Endothelial cell of umbilical vein (primary cell): ENCODE measurements at regions of chr11 and their contacts with region 1.

Region 1: DNA sequence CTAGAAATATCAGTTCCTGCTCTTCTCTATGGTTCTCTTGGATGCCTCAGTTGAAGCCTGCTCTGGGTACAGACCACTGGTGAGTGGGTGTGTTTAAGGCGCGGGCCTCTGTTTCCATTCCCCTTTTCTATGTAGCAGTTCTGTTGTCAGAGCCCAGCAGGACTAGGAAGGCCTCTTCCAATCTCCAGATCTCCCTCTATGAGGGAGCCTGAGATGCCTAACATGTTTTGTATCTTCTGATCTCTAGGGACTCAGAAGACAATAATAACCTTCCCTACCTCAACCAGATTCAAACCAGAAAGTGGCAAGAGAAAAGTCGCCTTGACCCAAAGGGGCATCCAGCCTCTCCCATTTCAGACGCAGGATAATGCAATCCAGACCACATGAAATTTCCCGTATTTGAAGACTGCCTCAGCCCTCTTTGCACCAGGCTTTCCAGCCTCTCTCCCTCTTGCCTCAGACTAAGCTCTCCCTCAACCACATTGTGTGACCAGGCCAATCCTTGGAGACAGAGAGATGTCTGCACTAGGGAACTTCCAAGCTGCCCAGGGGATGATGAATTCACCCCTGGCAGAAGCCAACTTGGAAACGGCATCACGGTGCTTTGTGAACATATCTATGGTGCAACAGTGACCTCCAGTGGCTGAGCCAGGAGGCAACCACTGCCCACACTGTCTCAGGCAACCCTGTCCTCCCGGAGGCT is 150.1 kb upstream of the UBASH3B start:
- DNase-seq: peak; percentile 77
- H3K4me3 ChIP-seq: no peak overlapping the region
- H3K27ac ChIP-seq: no peak overlapping the region
- H3K4me1 ChIP-seq: no peaks in the 10 kb centered on the region
- H3K27me3 ChIP-seq: peaks cover 2 to 6% of the 10 kb centered on the region in 2 experiments
- CTCF ChIP-seq: peak; percentile 83 to 84
- POLR2A ChIP-seq: no peak

Region 2: DNA sequence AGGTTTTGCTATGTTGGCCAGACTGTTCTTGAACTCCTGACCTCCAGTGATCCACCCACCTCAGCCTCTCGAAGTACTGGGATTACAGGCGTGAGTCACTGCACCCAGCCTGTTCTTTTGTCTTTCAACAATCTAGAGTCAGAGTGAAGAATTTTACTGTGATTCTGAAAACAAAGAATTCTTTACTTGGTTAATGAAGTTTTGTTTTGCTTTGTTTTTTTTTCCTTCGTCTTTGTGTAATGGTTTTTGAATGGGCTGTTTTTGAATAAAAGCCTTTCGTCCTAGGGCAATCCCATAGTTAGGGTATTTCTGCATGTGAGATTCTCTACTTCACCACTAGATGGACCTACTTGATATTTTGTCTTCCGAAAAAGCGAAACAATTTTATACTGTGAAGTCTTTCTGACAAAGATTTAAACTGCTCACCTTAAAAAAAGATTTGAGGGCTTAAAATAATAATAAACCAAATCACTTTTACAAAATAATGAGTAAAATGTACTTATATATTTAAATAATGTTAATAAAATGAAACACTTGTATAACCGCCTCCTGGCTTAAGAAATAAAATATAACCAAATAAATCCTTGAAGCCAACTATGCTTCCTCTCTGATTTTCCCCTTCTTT is 1256.3 kb before region 1 on chr11:
- CTCF ChIA-PET with region 1: interaction called, 3 read pairs
- POLR2A ChIA-PET with region 1: no interaction called
- dilution Hi-C with region 1: no loop called
- intact Hi-C with region 1: loop called (anchors 1 kb)
- DNase-seq: peak; percentile 54
- H3K4me3 ChIP-seq: no peak overlapping the region
- H3K27ac ChIP-seq: no peak overlapping the region
- H3K4me1 ChIP-seq: no peaks in the 10 kb centered on the region
- H3K27me3 ChIP-seq: peaks cover 0 to 2% of the 10 kb centered on the region in 2 experiments
- CTCF ChIP-seq: peak; percentile 45 to 58
- POLR2A ChIP-seq: no peak

Region 3: GRCh38 chr11:122020902-122021301 is 484.6 kb before region 1 on chr11:
- CTCF ChIA-PET with region 1: interaction called, 18 read pairs
- POLR2A ChIA-PET with region 1: no interaction called
- dilution Hi-C with region 1: no loop called
- intact Hi-C with region 1: loop called (anchors 1 kb)
- DNase-seq: peak; percentile 46
- H3K4me3 ChIP-seq: no peak overlapping the region
- H3K27ac ChIP-seq: no peak overlapping the region
- H3K4me1 ChIP-seq: no peaks in the 10 kb centered on the region
- H3K27me3 ChIP-seq: no peaks in the 10 kb centered on the region
- CTCF ChIP-seq: peak; percentile 38 to 57
- POLR2A ChIP-seq: no peak

Region 4: GRCh38 chr11:122405547-122406341 is 99.7 kb before region 1 on chr11:
- CTCF ChIA-PET with region 1: no interaction called
- POLR2A ChIA-PET with region 1: no interaction called
- dilution Hi-C with region 1: no loop called
- intact Hi-C with region 1: no loop called
- DNase-seq: no peak
- H3K4me3 ChIP-seq: no peak overlapping the region
- H3K27ac ChIP-seq: no peak overlapping the region
- H3K4me1 ChIP-seq: no peaks in the 10 kb centered on the region
- H3K27me3 ChIP-seq: peaks cover 0 to 3% of the 10 kb centered on the region in 2 experiments
- CTCF ChIP-seq: no peak
- POLR2A ChIP-seq: no peak